GM13977 (cell line): ENCODE measurements at regions of chr2 and their contacts with region 1.

Region 1: GRCh38 chr2:212686285-212686895 is 147.8 kb upstream of the ERBB4 start:
- DNase-seq: peak; percentile 60
- CTCF ChIP-seq: peak; percentile 73

Region 2: GRCh38 chr2:212777020-212777491 is 90.7 kb after region 1 on chr2:
- in situ Hi-C with region 1: loop called (anchors 10 kb)
- DNase-seq: peak; percentile 28
- CTCF ChIP-seq: peak; percentile 47

Region 3: GRCh38 chr2:213151437-213152064 is 465.2 kb after region 1 on chr2 and contains the start of gene IKZF2:
- in situ Hi-C with region 1: loop called (anchors 10 kb)
- DNase-seq: peak; percentile 83
- CTCF ChIP-seq: no peak